K562 (cell line): ENCODE measurements at regions of chr18 and their contacts with region 1.

Region 1: GRCh38 chr18:45664824-45665763 is 49.8 kb downstream of the SLC14A2 start:
- DNase-seq: peak; percentile 55 to 66 (median 61)
- ATAC-seq: peak; percentile 82
- H3K4me3 ChIP-seq: no peak overlapping the region
- H3K27ac ChIP-seq: no peak overlapping the region
- H3K4me1 ChIP-seq: peaks cover 7 to 8% of the 10 kb centered on the region in 2 experiments; a peak in 3 of 5 replicates
- H3K27me3 ChIP-seq: peaks cover 0 to 13% of the 10 kb centered on the region in 2 experiments; a peak in 2 of 5 replicates
- CTCF ChIP-seq: peak; percentile 69 to 83 (median 75)
- EP300 ChIP-seq: no peak
- POLR2A ChIP-seq: no peak
- RAD21 ChIP-seq: peak; percentile 76 to 82

Region 2: GRCh38 chr18:45467293-45467692 is 197.8 kb before region 1 on chr18:
- CTCF ChIA-PET with region 1: no interaction called
- POLR2A ChIA-PET with region 1: no interaction called
- in situ Hi-C with region 1: no loop called
- intact Hi-C with region 1: no loop called
- DNase-seq: no peak
- ATAC-seq: no peak
- H3K4me3 ChIP-seq: no peak overlapping the region
- H3K27ac ChIP-seq: no peak overlapping the region
- H3K4me1 ChIP-seq: no peaks in the 10 kb centered on the region
- H3K27me3 ChIP-seq: no peaks in the 10 kb centered on the region
- CTCF ChIP-seq: no peak
- EP300 ChIP-seq: no peak
- POLR2A ChIP-seq: no peak
- RAD21 ChIP-seq: no peak

Region 3: GRCh38 chr18:45540125-45540524 is 125.0 kb before region 1 on chr18:
- CTCF ChIA-PET with region 1: no interaction called
- POLR2A ChIA-PET with region 1: no interaction called
- in situ Hi-C with region 1: no loop called
- intact Hi-C with region 1: no loop called
- DNase-seq: no peak
- ATAC-seq: no peak
- H3K4me3 ChIP-seq: no peak overlapping the region
- H3K27ac ChIP-seq: no peak overlapping the region
- H3K4me1 ChIP-seq: no peaks in the 10 kb centered on the region
- H3K27me3 ChIP-seq: no peaks in the 10 kb centered on the region
- CTCF ChIP-seq: no peak
- EP300 ChIP-seq: no peak
- POLR2A ChIP-seq: no peak
- RAD21 ChIP-seq: no peak

Region 4: GRCh38 chr18:45690975-45691815 is 26.1 kb after region 1 on chr18:
- CTCF ChIA-PET with region 1: no interaction called
- POLR2A ChIA-PET with region 1: interaction called, 5 read pairs
- in situ Hi-C with region 1: no loop called
- intact Hi-C with region 1: loop called (anchors 1 kb)
- DNase-seq: peak; percentile 38 to 79 (median 46)
- ATAC-seq: peak; percentile 73
- H3K4me3 ChIP-seq: no peak overlapping the region
- H3K27ac ChIP-seq: no peak overlapping the region
- H3K4me1 ChIP-seq: peaks cover 14 to 21% of the 10 kb centered on the region in 2 experiments; a peak in 4 of 5 replicates
- H3K27me3 ChIP-seq: no peaks in the 10 kb centered on the region
- CTCF ChIP-seq: peak; percentile 76 to 81 (median 81)
- EP300 ChIP-seq: no peak
- POLR2A ChIP-seq: no peak
- RAD21 ChIP-seq: peak; percentile 77 to 88

Region 5: DNA sequence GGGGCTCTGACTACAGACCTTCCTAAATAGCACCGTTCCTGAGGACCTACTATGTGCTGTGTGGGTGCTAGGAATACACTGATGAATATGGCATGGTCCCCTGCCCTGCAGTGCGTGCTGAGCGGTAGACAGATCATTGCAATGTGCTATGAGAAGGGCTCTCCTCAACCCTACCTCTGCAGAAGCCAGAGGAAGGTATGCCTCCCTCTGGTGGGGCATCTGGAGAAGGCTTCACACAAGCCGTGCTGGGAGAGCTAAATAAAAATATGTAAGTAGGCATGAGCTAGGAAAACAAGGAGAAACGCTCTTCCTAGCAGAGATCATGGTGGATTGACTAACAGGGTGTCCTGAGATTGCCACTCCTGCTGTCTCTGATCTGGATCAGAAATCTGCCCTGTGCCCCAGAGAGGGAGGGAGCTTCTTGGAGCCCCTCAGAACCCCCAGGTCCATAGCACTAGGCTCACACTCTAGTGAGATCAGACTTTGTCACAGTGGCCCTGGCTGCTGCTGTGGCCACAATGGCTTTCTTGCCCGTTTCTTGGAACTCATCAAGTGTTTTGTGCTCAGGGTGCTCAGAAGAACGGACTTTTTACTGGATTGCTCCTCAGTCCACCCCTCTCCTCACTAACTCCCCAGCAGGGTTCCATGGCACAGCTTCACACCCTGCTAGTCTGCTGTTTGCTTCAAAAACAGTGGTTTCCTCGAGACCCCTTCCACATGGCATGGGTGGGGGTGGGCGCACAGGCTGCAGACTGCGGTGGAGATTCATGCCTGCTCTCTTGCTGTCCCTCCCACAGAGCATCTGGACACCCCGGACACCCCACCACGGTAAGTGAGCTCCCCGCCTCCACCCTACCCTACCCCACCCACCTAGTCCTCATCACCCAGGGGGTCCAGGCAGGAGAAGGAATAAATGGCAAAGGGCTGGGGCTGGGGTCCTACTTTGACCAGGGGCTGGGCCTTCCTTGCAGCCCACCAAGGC is 174.6 kb after region 1 on chr18:
- CTCF ChIA-PET with region 1: no interaction called
- POLR2A ChIA-PET with region 1: no interaction called
- in situ Hi-C with region 1: no loop called
- intact Hi-C with region 1: loop called (anchors 5 kb)
- DNase-seq: peak in 2 of 4 experiments; percentile 13 to 25
- ATAC-seq: peak; percentile 79
- H3K4me3 ChIP-seq: no peak overlapping the region
- H3K27ac ChIP-seq: no peak overlapping the region
- H3K4me1 ChIP-seq: peaks cover 3% of the 10 kb centered on the region in 2 experiments; a peak in 4 of 5 replicates
- H3K27me3 ChIP-seq: peaks cover 0 to 5% of the 10 kb centered on the region in 2 experiments; a peak in 2 of 5 replicates
- CTCF ChIP-seq: peak; percentile 29 to 52 (median 35); a peak in 3 of 6 replicates
- EP300 ChIP-seq: no peak
- POLR2A ChIP-seq: no peak
- RAD21 ChIP-seq: peak; percentile 42 to 50

Region 6: GRCh38 chr18:45910405-45911023 is 245.4 kb after region 1 on chr18:
- CTCF ChIA-PET with region 1: interaction called, 3 read pairs
- POLR2A ChIA-PET with region 1: no interaction called
- in situ Hi-C with region 1: no loop called
- intact Hi-C with region 1: loop called (anchors 1 kb)
- DNase-seq: peak; percentile 41 to 55 (median 46)
- ATAC-seq: peak; percentile 87
- H3K4me3 ChIP-seq: no peak overlapping the region
- H3K27ac ChIP-seq: no peak overlapping the region
- H3K4me1 ChIP-seq: no peaks in the 10 kb centered on the region
- H3K27me3 ChIP-seq: no peaks in the 10 kb centered on the region
- CTCF ChIP-seq: peak; percentile 62 to 79 (median 64)
- EP300 ChIP-seq: no peak
- POLR2A ChIP-seq: no peak
- RAD21 ChIP-seq: peak; percentile 38 to 43; a peak in 3 of 4 replicates

Region 7: DNA sequence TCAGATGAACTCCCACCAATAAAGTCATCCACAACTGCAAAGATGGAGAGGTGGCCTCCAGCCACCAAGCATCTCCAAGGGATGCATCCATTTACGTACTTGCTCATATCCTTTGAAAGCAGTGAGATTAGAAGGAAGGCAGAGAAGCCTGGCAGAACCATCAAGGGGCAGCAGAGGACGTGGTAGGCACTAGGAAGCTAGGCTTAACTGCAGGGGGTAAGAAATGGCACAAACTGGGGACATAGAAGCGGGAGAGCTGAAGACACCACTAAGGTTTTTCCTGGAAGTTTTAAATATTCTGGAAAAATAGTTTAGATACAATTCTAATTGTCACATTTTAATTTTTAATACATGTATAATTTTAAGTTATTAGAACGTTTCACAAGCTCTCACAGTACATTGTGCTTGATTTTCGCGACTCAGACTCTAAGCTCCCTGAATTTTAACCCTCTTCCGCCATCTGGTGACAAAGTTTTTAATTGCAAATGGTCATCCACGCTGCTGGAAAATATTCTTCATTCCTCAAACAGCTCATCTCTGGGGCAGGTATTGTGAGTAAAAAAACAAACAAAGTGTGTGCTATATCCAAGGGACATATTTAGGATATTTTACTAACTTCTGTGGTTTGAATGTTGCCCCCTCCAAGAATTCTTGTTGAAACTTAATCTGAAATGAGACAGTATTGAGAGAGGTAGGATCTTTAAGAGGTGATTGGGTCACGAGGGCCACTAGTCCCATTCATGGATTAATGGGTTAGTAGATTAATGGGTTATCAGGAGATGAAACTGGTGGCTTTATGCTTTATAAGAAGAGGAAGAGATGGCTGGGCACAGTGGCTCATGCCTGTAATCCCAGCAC is 408.6 kb after region 1 on chr18:
- CTCF ChIA-PET with region 1: interaction called, 4 read pairs
- POLR2A ChIA-PET with region 1: interaction called, 3 read pairs
- in situ Hi-C with region 1: loop called (anchors 10 kb)
- intact Hi-C with region 1: loop called (anchors 2 kb)
- DNase-seq: peak; percentile 30 to 70 (median 38)
- ATAC-seq: peak; percentile 58
- H3K4me3 ChIP-seq: no peak overlapping the region
- H3K27ac ChIP-seq: no peak overlapping the region
- H3K4me1 ChIP-seq: peaks cover 3 to 31% of the 10 kb centered on the region in 2 experiments; a peak in 4 of 5 replicates
- H3K27me3 ChIP-seq: no peaks in the 10 kb centered on the region
- CTCF ChIP-seq: peak; percentile 53 to 68 (median 58); a peak in 4 of 6 replicates
- EP300 ChIP-seq: no peak
- POLR2A ChIP-seq: no peak
- RAD21 ChIP-seq: peak; percentile 79 to 85